MCF 10A (cell line): ENCODE measurements at regions of chr2 and their contacts with region 1.

Region 1: GRCh38 chr2:85017411-85018048 is 46.6 kb downstream of the KCMF1 start:
- DNase-seq: no peak
- H3K4me3 Mint-ChIP-seq: no peak overlapping the region
- H3K27ac Mint-ChIP-seq: no peak overlapping the region
- H3K4me1 Mint-ChIP-seq: peaks cover 22% of the 10 kb centered on the region
- H3K27me3 Mint-ChIP-seq: no peaks in the 10 kb centered on the region
- CTCF ChIP-seq: peak; percentile 26

Region 2: DNA sequence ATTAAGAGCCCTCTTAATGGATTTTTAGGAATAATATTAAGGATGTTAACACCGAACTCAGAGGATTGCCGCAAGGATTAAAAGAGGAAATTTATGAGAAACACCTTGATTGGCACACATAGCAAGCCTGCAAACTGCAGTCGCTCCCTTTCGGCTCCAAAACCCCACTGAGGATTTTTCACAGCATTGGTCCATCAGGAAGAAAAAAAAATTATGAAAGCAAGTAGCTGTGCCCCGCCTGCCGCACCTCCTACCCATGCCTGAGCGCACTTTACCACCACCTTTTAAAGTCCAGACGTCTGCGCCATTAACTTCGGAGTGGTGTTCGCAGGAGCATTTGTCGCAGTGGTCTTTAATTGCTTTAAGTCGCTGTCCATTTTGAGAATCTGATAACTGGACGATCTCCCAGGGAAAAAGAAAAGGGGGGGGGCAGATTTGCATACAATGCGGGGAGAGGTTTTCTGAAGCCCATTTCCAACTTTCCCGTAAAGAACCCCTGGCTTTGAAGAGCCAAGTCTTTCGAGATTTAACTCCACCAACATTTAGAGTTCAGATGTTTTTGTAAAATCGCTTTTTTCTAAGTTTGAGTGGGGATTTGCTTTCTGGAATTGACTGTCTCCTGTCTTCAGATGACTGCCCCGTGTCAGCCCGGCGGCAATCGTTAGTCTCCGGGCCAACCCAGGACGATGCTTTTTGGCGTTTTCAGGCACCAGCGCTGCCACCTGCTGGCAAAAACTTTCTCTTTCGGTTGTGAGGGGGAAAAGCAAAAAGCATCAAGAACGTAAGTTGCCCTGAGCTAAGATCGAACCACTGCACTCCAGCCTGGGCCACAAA is 135.7 kb before region 1 on chr2:
- CTCF ChIA-PET with region 1: interaction called, 3 read pairs
- POLR2A ChIA-PET with region 1: no interaction called
- intact Hi-C with region 1: loop called (anchors 1 kb)
- DNase-seq: peak; percentile 88
- H3K4me3 Mint-ChIP-seq: peak overlapping the region; percentile 88
- H3K27ac Mint-ChIP-seq: peak overlapping the region; percentile 52
- H3K4me1 Mint-ChIP-seq: peaks cover 17% of the 10 kb centered on the region
- H3K27me3 Mint-ChIP-seq: no peaks in the 10 kb centered on the region
- CTCF ChIP-seq: peak; percentile 47

Region 3: DNA sequence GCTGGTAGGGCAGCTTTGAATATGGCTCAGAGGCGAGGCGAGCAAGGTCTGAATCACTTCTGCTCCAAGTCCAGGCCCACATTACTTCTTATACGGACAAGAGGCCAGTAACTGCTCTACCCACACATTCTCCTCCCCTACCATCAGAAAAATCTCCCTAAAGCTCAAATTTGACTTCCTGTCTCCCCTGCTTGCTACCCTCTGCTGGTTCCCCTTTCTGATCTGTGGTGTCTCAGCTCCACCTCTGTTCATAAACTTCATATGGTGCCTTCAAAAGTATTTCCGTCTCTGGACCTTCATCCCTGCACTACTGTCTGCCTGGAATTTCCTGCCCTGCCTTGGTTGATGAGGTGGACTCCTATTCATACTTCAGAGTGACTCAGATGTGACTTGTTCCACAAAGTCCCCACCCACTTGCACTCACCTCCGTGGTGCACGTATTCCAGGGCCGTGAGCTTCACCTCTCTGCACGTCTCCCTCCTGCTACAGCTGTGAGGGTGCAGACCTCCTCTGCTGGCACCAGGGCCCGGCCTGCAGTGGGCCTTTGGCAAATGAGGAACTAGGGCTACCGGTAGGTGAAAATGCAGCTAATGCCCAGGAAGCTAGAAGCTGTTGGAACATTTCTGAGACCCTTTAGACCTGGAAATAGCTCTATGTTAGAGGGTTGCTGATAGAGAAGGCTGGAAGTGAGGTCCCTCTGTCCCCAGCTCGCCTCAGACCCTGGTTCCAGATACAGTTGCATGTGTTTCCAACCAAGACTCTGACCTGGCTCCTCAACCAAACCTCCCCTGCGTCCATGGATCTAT is 71.1 kb before region 1 on chr2:
- CTCF ChIA-PET with region 1: interaction called, 15 read pairs
- POLR2A ChIA-PET with region 1: interaction called, 3 read pairs
- intact Hi-C with region 1: no loop called
- DNase-seq: peak; percentile 85
- H3K4me3 Mint-ChIP-seq: peak overlapping the region; percentile 8
- H3K27ac Mint-ChIP-seq: peak overlapping the region; percentile 89
- H3K4me1 Mint-ChIP-seq: peaks cover 13% of the 10 kb centered on the region
- H3K27me3 Mint-ChIP-seq: no peaks in the 10 kb centered on the region
- CTCF ChIP-seq: no peak

Region 4: GRCh38 chr2:84970868-84971509 is 46.5 kb before region 1 on chr2 and contains the start of gene KCMF1:
- CTCF ChIA-PET with region 1: interaction called, 8 read pairs
- POLR2A ChIA-PET with region 1: interaction called, 14 read pairs
- intact Hi-C with region 1: loop called (anchors 5 kb)
- DNase-seq: peak; percentile 69
- H3K4me3 Mint-ChIP-seq: peak within 1 kb of the TSS; percentile 97
- H3K27ac Mint-ChIP-seq: peak within 1 kb of the TSS; percentile 97
- H3K4me1 Mint-ChIP-seq: peaks cover 12% of the 10 kb centered on the region
- H3K27me3 Mint-ChIP-seq: no peaks in the 10 kb centered on the region
- CTCF ChIP-seq: no peak
- total RNA-seq, gene KCMF1: 169 and 170 TPM in 2 replicates

Region 5: DNA sequence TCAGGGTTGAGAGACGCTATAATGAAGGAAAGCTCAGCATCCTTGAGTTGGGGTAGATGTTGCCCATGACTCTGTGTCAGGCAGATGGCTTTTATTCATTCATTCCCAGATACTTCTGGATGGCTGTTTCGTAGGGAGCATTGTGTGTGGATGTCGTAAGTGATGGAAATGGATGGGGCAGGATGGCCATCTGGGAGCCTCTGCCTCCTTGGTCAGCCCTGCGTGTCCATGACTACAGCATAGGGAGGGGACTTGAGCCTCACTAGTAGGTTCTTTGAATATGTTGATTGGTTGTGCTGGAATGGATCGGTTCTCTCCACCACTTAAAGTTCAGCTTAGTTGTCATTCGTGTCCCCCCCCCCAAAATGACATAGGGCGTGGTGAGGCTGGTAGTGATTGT is 265.4 kb after region 1 on chr2:
- CTCF ChIA-PET with region 1: interaction called, 7 read pairs
- POLR2A ChIA-PET with region 1: interaction called, 6 read pairs
- intact Hi-C with region 1: loop called (anchors 2 kb)
- DNase-seq: no peak
- H3K4me3 Mint-ChIP-seq: no peak overlapping the region
- H3K27ac Mint-ChIP-seq: no peak overlapping the region
- H3K4me1 Mint-ChIP-seq: peaks cover 18% of the 10 kb centered on the region
- H3K27me3 Mint-ChIP-seq: no peaks in the 10 kb centered on the region
- CTCF ChIP-seq: no peak